WTC11 (cell line): ENCODE measurements at regions of chr10 and their contacts with region 1.

Region 1: GRCh38 chr10:107085665-107086525 is 78.6 kb downstream of the SORCS1 start:
- DNase-seq: no peak
- ATAC-seq: no peak
- H3K4me3 Mint-ChIP-seq: no peak overlapping the region
- H3K27ac Mint-ChIP-seq: no peak overlapping the region
- H3K4me1 Mint-ChIP-seq: peaks cover 12% of the 10 kb centered on the region
- H3K27me3 Mint-ChIP-seq: no peaks in the 10 kb centered on the region
- CTCF ChIP-seq: no peak

Region 2: GRCh38 chr10:106722524-106722923 is 363.4 kb before region 1 on chr10:
- CTCF ChIA-PET with region 1: interaction called, 10 read pairs
- POLR2A ChIA-PET with region 1: no interaction called
- DNase-seq: no peak
- ATAC-seq: peak; percentile 71
- H3K4me3 Mint-ChIP-seq: no peak overlapping the region
- H3K27ac Mint-ChIP-seq: no peak overlapping the region
- H3K4me1 Mint-ChIP-seq: peaks cover 15% of the 10 kb centered on the region
- H3K27me3 Mint-ChIP-seq: no peaks in the 10 kb centered on the region
- CTCF ChIP-seq: no peak

Region 3: GRCh38 chr10:107011105-107011504 is 74.8 kb before region 1 on chr10:
- CTCF ChIA-PET with region 1: no interaction called
- POLR2A ChIA-PET with region 1: no interaction called
- DNase-seq: no peak
- ATAC-seq: peak; percentile 54; the same call in 1 of the 2 replicates
- H3K4me3 Mint-ChIP-seq: no peak overlapping the region
- H3K27ac Mint-ChIP-seq: no peak overlapping the region
- H3K4me1 Mint-ChIP-seq: peaks cover 33% of the 10 kb centered on the region
- H3K27me3 Mint-ChIP-seq: no peaks in the 10 kb centered on the region
- CTCF ChIP-seq: no peak

Region 4: GRCh38 chr10:107232013-107232412 is 146.1 kb after region 1 on chr10:
- CTCF ChIA-PET with region 1: no interaction called
- POLR2A ChIA-PET with region 1: no interaction called
- DNase-seq: no peak
- ATAC-seq: no peak
- H3K4me3 Mint-ChIP-seq: no peak overlapping the region
- H3K27ac Mint-ChIP-seq: no peak overlapping the region
- H3K4me1 Mint-ChIP-seq: no peaks in the 10 kb centered on the region
- H3K27me3 Mint-ChIP-seq: no peaks in the 10 kb centered on the region
- CTCF ChIP-seq: no peak